ENCODE measurements at regions of chr11 and their contacts with region 1.

Region 1: DNA sequence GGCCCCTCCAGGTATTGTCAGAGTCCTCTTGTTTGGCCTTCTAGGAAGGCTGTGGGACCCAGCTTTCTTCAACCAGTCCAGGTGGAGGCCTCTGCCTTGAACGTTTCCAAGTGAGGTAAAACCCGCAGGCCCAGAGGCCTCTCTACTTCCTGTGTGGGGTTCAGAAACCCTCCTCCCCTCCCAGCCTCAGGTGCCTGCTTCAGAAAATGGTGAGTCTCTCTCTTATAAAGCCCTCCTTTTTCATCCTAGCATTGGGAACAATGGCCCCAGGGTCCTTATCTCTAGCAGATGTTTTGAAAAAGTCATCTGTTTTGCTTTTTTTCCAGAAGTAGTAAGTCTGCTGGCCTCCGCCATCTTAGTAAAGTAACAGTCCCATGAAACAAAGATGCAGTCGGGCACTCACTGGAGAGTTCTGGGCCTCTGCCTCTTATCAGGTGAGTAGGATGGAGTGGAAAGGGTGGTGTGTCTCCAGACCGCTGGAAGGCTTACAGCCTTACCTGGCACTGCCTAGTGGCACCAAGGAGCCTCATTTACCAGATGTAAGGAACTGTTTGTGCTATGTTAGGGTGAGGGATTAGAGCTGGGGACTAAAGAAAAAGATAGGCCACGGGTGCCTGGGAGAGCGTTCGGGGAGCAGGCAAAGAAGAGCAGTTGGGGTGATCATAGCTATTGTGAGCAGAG is at the start of gene CD3E:
- DNase-seq: peak; percentile 88
- H3K4me3 Mint-ChIP-seq: peak within 1 kb of the TSS; percentile 98
- H3K27ac Mint-ChIP-seq: peak within 1 kb of the TSS; percentile 100
- H3K4me1 Mint-ChIP-seq: peaks cover 68% of the 10 kb centered on the region
- H3K27me3 Mint-ChIP-seq: no peaks in the 10 kb centered on the region
- total RNA-seq, gene CD3E: 377 to 415 TPM

Region 2: GRCh38 chr11:118240999-118241768 is 63.5 kb before region 1 on chr11:
- CTCF ChIA-PET with region 1: no interaction called
- intact Hi-C with region 1: loop called (anchors 1 kb)
- DNase-seq: peak; percentile 87
- H3K4me3 Mint-ChIP-seq: peak overlapping the region; percentile 77
- H3K27ac Mint-ChIP-seq: peak overlapping the region; percentile 99
- H3K4me1 Mint-ChIP-seq: peaks cover 91% of the 10 kb centered on the region
- H3K27me3 Mint-ChIP-seq: no peaks in the 10 kb centered on the region

Region 3: GRCh38 chr11:118353084-118353710 is 48.5 kb after region 1 on chr11:
- CTCF ChIA-PET with region 1: interaction called, 16 read pairs
- intact Hi-C with region 1: no loop called
- DNase-seq: no peak
- H3K4me3 Mint-ChIP-seq: no peak overlapping the region
- H3K27ac Mint-ChIP-seq: peak overlapping the region; percentile 80
- H3K4me1 Mint-ChIP-seq: peaks cover 24% of the 10 kb centered on the region
- H3K27me3 Mint-ChIP-seq: no peaks in the 10 kb centered on the region

Region 4: GRCh38 chr11:118374729-118375128 is 70.0 kb after region 1 on chr11:
- CTCF ChIA-PET with region 1: no interaction called
- intact Hi-C with region 1: no loop called
- DNase-seq: no peak
- H3K4me3 Mint-ChIP-seq: no peak overlapping the region
- H3K27ac Mint-ChIP-seq: no peak overlapping the region
- H3K4me1 Mint-ChIP-seq: peaks cover 7% of the 10 kb centered on the region
- H3K27me3 Mint-ChIP-seq: no peaks in the 10 kb centered on the region

Region 5: GRCh38 chr11:118652681-118653181 is 348.0 kb after region 1 on chr11:
- CTCF ChIA-PET with region 1: no interaction called
- intact Hi-C with region 1: no loop called
- DNase-seq: no peak
- H3K4me3 Mint-ChIP-seq: no peak overlapping the region
- H3K27ac Mint-ChIP-seq: no peak overlapping the region
- H3K4me1 Mint-ChIP-seq: peaks cover 9% of the 10 kb centered on the region
- H3K27me3 Mint-ChIP-seq: no peaks in the 10 kb centered on the region

Region 6: GRCh38 chr11:118851970-118852369 is 547.3 kb after region 1 on chr11:
- CTCF ChIA-PET with region 1: no interaction called
- intact Hi-C with region 1: no loop called
- DNase-seq: no peak
- H3K4me3 Mint-ChIP-seq: no peak overlapping the region
- H3K27ac Mint-ChIP-seq: no peak overlapping the region
- H3K4me1 Mint-ChIP-seq: peaks cover 5% of the 10 kb centered on the region
- H3K27me3 Mint-ChIP-seq: no peaks in the 10 kb centered on the region